Activated CD8-positive, alpha-beta T cell treated with anti-CD3 and anti-CD28 coated beads, Interleukin-2, amount 10 ng/mL, durations not matched to agents 7 days and 5 days (primary cell): ENCODE measurements at regions of chr1 and their contacts with region 1.

Region 1: GRCh38 chr1:205430696-205431305 is 8.9 kb upstream of the LEMD1 start:
- DNase-seq: peak; percentile 64
- ATAC-seq: peak; percentile 75
- H3K4me3 Mint-ChIP-seq: peak overlapping the region; percentile 74
- H3K27ac Mint-ChIP-seq: peak overlapping the region; percentile 32
- H3K4me1 Mint-ChIP-seq: peaks cover 11% of the 10 kb centered on the region
- H3K27me3 Mint-ChIP-seq: peaks cover 25% of the 10 kb centered on the region

Region 2: DNA sequence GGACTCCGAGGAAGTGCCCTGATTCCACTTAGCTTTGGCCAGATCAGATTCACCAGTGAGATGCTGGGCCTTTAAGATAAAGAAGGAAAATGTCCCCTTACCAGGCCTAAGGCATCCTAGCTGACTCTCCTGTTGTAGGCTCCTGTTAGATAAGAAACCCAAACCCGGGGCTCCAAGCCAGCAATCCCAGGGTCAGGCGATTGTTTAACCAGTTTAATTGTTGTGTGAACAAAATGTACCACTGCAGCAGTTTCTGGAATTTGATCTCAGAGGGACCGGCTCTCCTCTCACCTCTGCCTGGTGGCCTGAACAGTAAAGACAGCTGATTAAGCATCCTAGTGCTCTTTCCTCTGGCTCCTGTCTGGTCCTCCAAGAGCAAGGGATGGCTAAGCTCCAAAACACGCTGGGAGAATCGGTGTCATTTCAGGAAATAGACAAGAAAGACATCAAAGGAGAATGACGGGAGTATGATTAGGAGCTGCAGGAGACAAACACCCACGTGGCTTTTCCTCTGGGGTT is 64.8 kb before region 1 on chr1:
- CTCF ChIA-PET with region 1: no interaction called
- POLR2A ChIA-PET with region 1: no interaction called
- DNase-seq: no peak
- ATAC-seq: no peak
- H3K4me3 Mint-ChIP-seq: no peak overlapping the region
- H3K27ac Mint-ChIP-seq: no peak overlapping the region
- H3K4me1 Mint-ChIP-seq: no peaks in the 10 kb centered on the region
- H3K27me3 Mint-ChIP-seq: peaks cover 15% of the 10 kb centered on the region

Region 3: GRCh38 chr1:205416322-205416721 is 14.5 kb before region 1 on chr1:
- CTCF ChIA-PET with region 1: interaction called, 14 read pairs
- POLR2A ChIA-PET with region 1: no interaction called
- DNase-seq: no peak
- ATAC-seq: no peak
- H3K4me3 Mint-ChIP-seq: no peak overlapping the region
- H3K27ac Mint-ChIP-seq: no peak overlapping the region
- H3K4me1 Mint-ChIP-seq: no peaks in the 10 kb centered on the region
- H3K27me3 Mint-ChIP-seq: peaks cover 22% of the 10 kb centered on the region

Region 4: DNA sequence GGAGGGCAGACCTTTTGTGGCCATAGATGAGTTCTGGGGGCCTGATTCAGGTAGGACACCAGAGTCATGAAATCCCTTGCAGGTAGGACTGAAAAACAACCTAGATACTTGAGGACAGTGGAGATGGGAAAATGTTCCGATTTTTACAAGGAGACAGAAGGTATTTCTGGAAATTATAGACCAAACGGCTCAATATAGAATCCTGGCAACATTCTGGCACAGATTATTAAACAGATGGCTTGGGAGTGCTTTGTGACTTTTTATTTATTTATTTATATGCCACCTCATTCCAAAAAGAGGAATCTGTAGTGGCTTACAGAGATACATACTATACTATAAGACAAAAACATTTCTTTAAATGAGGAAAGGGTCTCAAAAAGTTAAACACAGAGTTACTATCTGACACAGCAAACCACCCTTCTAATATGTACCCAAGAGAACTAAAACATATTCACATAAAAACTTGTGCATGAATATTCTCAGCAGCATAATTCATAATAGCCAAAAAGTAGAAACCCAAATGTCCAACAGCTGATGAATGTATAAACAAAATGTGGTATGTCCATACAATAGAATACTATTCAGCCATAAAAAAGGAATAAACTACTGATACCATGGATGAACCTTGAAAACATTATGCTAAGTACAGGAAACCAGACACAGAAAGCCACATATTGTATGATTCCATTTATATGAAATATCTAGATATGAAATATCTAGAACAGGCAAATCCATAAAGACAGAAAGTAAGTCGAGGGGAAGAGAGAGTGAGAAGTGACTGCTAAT is 123.4 kb after region 1 on chr1:
- CTCF ChIA-PET with region 1: no interaction called
- POLR2A ChIA-PET with region 1: no interaction called
- DNase-seq: no peak
- ATAC-seq: no peak
- H3K4me3 Mint-ChIP-seq: no peak overlapping the region
- H3K27ac Mint-ChIP-seq: no peak overlapping the region
- H3K4me1 Mint-ChIP-seq: no peaks in the 10 kb centered on the region
- H3K27me3 Mint-ChIP-seq: peaks cover 44% of the 10 kb centered on the region